ENCODE measurements at regions of chr10 and their contacts with region 1.

Region 1: DNA sequence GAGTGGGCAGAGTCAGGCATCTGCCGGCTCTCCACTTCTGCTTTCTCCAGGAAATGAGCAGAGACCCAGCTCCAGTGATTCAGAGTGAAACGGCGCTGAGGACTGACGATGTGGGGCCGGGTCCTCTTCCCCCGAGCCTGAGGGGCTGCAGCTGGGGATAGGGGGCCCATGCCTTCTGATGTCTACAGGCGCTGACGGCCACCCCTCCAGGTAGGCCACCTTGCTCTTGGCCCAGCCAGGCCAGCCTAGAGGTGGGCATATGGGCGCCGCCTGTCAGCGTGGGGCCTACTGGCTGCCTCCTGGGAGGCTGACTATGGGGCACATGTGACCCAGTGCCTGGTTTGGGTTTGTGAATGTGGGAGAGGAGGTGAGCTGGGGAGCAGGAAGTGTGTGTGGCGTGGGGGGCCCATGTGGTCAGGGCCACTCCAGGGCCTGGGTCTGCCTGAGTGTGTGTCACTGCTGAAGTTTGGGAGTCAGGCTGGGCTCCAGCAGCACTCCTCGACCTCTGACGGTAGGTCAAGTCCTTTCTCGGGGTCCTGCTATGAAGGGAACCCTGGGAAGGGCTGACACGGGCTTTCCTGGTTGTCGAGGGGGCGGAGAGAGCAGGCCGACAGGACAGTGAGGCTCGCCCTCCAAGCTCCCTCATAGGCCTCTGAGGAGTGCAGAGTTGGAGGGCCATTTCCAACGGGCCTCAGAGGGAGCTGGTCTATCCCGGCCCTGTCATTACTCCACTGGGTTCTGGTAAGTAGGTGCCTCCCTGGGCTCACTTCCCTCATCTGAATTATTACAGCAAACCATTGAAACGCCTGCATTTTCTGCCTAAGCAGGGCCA is at the start of gene WDFY4:
- DNase-seq: no peak
- H3K4me3 ChIP-seq: peak within 1 kb of the TSS; percentile 10 to 22 (median 21)
- H3K27ac ChIP-seq: peak within 1 kb of the TSS in 1 of 2 donors; percentile 19
- H3K4me1 ChIP-seq: no peaks in the 10 kb centered on the region
- H3K27me3 ChIP-seq: no peaks in the 10 kb centered on the region
- CTCF ChIP-seq: no peak
- POLR2A ChIP-seq: no peak
- total RNA-seq, gene WDFY4: 2.3 to 7.0 (median 5.8) TPM

Region 2: GRCh38 chr10:48551861-48552591 is 133.0 kb before region 1 on chr10:
- intact Hi-C with region 1: no loop called
- DNase-seq: no peak
- H3K4me3 ChIP-seq: no peak overlapping the region
- H3K27ac ChIP-seq: no peak overlapping the region
- H3K4me1 ChIP-seq: no peaks in the 10 kb centered on the region
- H3K27me3 ChIP-seq: no peaks in the 10 kb centered on the region
- CTCF ChIP-seq: peak in 2 of 3 donors; percentile 23 to 40
- POLR2A ChIP-seq: no peak

Region 3: DNA sequence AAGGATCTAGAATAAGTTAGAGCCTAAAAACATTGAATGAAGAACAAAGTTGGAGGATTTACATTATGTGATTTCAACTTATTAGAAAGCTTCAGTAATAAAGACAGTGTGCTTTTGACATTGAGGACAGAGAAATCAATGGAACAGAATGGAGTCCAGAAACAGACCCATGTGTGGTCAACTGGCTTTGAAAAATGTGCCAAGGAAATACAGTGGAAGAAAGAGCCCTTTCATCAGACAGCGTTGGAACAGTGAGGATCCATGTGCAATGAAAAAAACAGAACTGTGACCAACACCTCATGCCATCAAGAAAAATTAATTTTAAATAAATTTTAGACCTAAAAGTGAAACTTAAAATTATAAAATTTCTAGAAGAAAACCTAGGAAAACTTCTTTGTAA is 305.2 kb after region 1 on chr10:
- intact Hi-C with region 1: loop called (anchors 5 kb)
- DNase-seq: no peak
- H3K4me3 ChIP-seq: no peak overlapping the region
- H3K27ac ChIP-seq: no peak overlapping the region
- H3K4me1 ChIP-seq: no peaks in the 10 kb centered on the region
- H3K27me3 ChIP-seq: no peaks in the 10 kb centered on the region
- CTCF ChIP-seq: no peak
- POLR2A ChIP-seq: no peak

Measured in breast epithelium (tissue), 4 donors.